ENCODE measurements at regions of chr11 and their contacts with region 1.

Region 1: GRCh38 chr11:72483412-72484186 is 49.3 kb upstream of the CLPB start:
- DNase-seq: no peak
- ATAC-seq: peak; percentile 19 to 74

Region 2: DNA sequence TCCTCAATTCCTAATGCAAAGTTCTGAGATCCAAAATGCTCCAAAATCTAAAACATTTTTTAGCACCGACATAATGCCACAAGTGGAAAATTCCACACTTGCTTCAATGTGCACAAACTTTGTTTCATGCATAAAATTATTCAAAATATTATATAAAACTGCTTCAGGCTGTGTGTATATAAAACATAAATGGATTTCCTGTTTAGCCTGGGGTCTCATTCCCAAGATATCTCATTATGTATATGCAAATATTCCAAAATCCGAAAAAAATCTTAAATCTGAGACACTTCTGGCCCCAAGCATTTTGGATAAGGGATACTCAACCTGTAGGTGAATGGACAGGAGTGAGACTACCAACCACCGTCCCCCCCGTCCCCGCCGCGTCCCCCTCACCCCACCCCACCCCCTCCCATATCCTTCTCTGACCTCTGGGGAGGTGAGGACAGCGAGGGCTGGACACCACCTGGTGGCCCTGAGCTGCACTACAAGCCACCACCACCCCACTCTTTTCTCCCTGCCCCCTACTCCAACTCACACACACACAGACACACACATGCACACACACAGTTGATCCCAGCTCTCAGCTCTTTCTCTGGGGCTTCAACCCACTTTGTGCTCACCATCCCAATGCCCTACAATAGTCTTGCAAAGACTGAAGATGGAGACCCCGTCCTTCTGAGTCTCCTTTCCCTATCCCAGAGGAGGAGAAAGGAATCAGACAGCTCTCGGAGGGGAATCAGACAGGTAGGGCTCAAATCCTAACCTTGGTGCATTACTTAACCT is 89.7 kb after region 1 on chr11:
- intact Hi-C with region 1: loop called (anchors 5 to 10 kb)
- DNase-seq: no peak
- ATAC-seq: peak; percentile 69 to 79